Activated B cell treated with CpG ODN at 0.5 μM for 24 hours (primary cell): ENCODE measurements at regions of chr2 and their contacts with region 1.

Region 1: GRCh38 chr2:70104231-70105111 is 17.2 kb downstream of the PCBP1 start:
- DNase-seq: no peak
- ATAC-seq: no peak
- H3K4me3 Mint-ChIP-seq: peak overlapping the region; percentile 80
- H3K27ac Mint-ChIP-seq: peak overlapping the region; percentile 94
- H3K4me1 Mint-ChIP-seq: peaks cover 55% of the 10 kb centered on the region
- H3K27me3 Mint-ChIP-seq: no peaks in the 10 kb centered on the region
- CTCF ChIP-seq: no peak

Region 2: DNA sequence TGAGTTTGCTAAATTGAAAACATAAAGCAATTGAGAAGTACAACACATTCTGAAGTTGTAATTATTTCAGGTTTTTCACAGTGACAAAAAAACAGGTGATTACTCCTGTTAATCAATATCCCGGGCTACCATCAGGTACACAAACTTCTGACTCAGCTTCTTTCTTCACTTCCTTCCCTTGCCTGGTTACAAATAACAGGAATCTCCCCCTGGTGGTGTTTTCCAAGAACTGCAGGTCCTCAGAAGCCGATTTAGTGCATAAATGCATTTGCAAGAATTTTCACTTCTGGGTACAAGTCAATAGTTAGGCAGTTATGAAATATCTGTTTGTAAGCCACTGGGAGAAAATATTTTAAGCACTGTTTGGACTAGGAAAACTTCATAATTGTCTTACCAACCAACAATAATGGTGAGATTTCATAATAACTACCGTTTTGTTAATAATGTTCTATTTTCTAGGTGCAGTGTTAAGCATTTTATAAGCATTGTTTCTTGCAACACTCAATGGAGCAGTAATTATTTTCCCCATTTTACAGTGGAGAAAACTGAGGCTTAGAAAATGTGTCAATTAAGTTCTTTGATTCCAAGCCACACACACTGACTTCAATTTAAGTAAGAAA is 287.4 kb before region 1 on chr2:
- CTCF ChIA-PET with region 1: no interaction called
- POLR2A ChIA-PET with region 1: no interaction called
- intact Hi-C with region 1: no loop called
- DNase-seq: no peak
- ATAC-seq: peak; percentile 89
- H3K4me3 Mint-ChIP-seq: no peak overlapping the region
- H3K27ac Mint-ChIP-seq: no peak overlapping the region
- H3K4me1 Mint-ChIP-seq: peaks cover 5% of the 10 kb centered on the region
- H3K27me3 Mint-ChIP-seq: no peaks in the 10 kb centered on the region
- CTCF ChIP-seq: peak; percentile 64

Region 3: GRCh38 chr2:70115646-70116442 is 11.4 kb after region 1 on chr2:
- CTCF ChIA-PET with region 1: no interaction called
- POLR2A ChIA-PET with region 1: interaction called, 82 read pairs
- intact Hi-C with region 1: loop called (anchors 1 kb)
- DNase-seq: no peak
- ATAC-seq: peak; percentile 54
- H3K4me3 Mint-ChIP-seq: peak overlapping the region; percentile 46
- H3K27ac Mint-ChIP-seq: peak overlapping the region; percentile 73
- H3K4me1 Mint-ChIP-seq: peaks cover 49% of the 10 kb centered on the region
- H3K27me3 Mint-ChIP-seq: no peaks in the 10 kb centered on the region
- CTCF ChIP-seq: no peak

Region 4: GRCh38 chr2:70161069-70161534 is 56.6 kb after region 1 on chr2:
- CTCF ChIA-PET with region 1: no interaction called
- POLR2A ChIA-PET with region 1: no interaction called
- intact Hi-C with region 1: no loop called
- DNase-seq: no peak
- ATAC-seq: no peak
- H3K4me3 Mint-ChIP-seq: no peak overlapping the region
- H3K27ac Mint-ChIP-seq: no peak overlapping the region
- H3K4me1 Mint-ChIP-seq: no peaks in the 10 kb centered on the region
- H3K27me3 Mint-ChIP-seq: no peaks in the 10 kb centered on the region
- CTCF ChIP-seq: no peak